ENCODE measurements at regions of chr9 and their contacts with region 1.

Region 1: GRCh38 chr9:84343111-84343521 is 2.6 kb upstream of the SLC28A3 start:
- DNase-seq: no peak
- ATAC-seq: 0 out of 2 replicates have a peak, but pooled peaks have one; percentile 56
- H3K4me3 ChIP-seq: no peak overlapping the region
- H3K27ac ChIP-seq: no peak overlapping the region
- H3K4me1 ChIP-seq: no peaks in the 10 kb centered on the region
- H3K27me3 ChIP-seq: no peaks in the 10 kb centered on the region
- CTCF ChIP-seq: no peak

Region 2: DNA sequence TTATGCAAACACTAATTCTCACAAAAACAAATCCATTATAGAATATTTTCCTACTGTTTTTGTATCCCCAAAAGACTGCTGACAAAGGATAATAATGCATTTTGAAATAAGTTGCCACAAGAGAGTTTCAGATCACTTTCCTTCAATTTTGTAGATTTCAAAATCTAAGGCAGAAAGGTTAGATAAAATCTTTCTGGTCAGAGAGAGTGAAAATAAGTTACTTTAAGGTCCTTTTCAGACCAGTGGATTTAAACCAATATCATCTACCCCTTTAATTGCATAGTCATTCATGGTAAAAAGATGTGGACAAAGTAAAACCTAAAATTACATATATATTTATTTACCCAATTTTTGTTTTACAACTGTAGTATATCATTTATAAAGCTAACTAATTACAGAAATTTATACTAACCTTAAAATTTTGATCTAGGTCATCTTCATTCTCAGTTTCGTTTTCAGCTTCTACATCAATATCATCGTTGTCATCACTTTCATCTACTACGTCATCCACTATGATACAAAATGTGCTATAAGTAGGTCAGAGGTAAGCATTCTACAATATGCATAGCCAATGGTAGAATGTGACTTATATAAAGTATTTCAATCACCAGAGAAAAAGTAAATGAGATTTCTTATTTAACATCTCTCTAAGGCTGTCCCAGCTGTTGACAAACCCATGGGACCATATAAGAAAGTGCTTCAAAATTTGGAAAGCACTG is 1303.0 kb after region 1 on chr9:
- CTCF ChIA-PET with region 1: no interaction called
- POLR2A ChIA-PET with region 1: interaction called, 16 read pairs
- in situ Hi-C with region 1: no loop called
- intact Hi-C with region 1: no loop called
- DNase-seq: no peak
- ATAC-seq: no peak
- H3K4me3 ChIP-seq: no peak overlapping the region
- H3K27ac ChIP-seq: no peak overlapping the region
- H3K4me1 ChIP-seq: no peaks in the 10 kb centered on the region
- H3K27me3 ChIP-seq: no peaks in the 10 kb centered on the region
- CTCF ChIP-seq: no peak